CD4-positive, alpha-beta memory T cell (primary cell): ENCODE measurements at regions of chr2 and their contacts with region 1.

Region 1: GRCh38 chr2:207166039-207166348 is 246 bp upstream of the KLF7 start:
- DNase-seq: peak; percentile 90 to 97 (median 96)
- H3K4me3 ChIP-seq: peak overlapping the region; percentile 36 to 67
- H3K4me3 Mint-ChIP-seq: peak overlapping the region; percentile 89 to 99 (median 95)
- H3K27ac ChIP-seq: peak overlapping the region; percentile 97
- H3K27ac Mint-ChIP-seq: peak overlapping the region; percentile 91 to 98 (median 96)
- H3K4me1 ChIP-seq: peaks cover 40% of the 10 kb centered on the region
- H3K4me1 Mint-ChIP-seq: peaks cover 27 to 60% (median 40%) of the 10 kb centered on the region in 4 donors
- H3K27me3 ChIP-seq: no peaks in the 10 kb centered on the region
- H3K27me3 Mint-ChIP-seq: peaks cover 3 to 10% of the 10 kb centered on the region in 2 donors

Region 2: DNA sequence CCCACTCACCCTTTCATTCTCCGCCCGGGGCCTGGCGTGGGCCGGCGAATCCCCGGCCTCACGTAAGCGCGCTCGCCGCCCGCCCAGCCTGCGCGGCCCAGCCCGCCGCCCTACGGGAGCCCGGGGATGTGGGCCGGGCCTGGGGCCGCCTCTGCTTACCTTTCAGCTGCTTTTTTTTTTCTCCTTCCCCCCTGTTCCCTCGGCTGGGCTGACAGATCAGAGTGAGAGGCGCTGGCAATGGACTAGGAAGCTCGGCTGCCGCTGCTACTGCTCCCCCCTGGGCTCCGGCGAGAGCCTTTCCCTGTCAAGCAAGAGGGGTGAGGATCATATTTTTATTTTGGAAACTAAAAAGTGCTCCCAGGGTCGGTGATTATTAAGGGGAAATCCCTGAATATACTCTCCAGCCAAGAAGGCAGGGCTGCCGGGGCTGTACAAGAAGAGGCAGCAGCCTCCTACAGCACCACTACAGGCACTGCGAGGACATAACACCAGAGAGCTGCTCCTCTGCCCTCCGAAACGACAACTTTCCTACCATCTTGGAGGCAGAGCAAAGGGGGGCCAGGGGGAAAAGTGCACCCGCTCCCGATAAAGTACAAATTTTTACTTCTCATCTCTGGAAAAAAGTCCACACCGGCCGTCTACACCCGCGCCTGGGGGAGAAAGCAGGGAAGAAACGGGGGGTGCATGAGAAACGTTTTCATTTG is 1080.1 kb before region 1 on chr2 and contains the start of gene INO80D:
- CTCF ChIA-PET with region 1: no interaction called
- POLR2A ChIA-PET with region 1: no interaction called
- intact Hi-C with region 1: loop called (anchors 5 kb)
- DNase-seq: peak; percentile 88 to 91 (median 89)
- H3K4me3 ChIP-seq: peak within 1 kb of the TSS; percentile 81 to 94
- H3K4me3 Mint-ChIP-seq: peak within 1 kb of the TSS; percentile 98 to 100 (median 99)
- H3K27ac ChIP-seq: peak within 1 kb of the TSS; percentile 98
- H3K27ac Mint-ChIP-seq: peak within 1 kb of the TSS; percentile 99 to 100 (median 100)
- H3K4me1 ChIP-seq: peaks cover 44% of the 10 kb centered on the region
- H3K4me1 Mint-ChIP-seq: peaks cover 24 to 54% (median 37%) of the 10 kb centered on the region in 4 donors
- H3K27me3 ChIP-seq: no peaks in the 10 kb centered on the region
- H3K27me3 Mint-ChIP-seq: no peaks in the 10 kb centered on the region
- total RNA-seq, gene INO80D: 40.2 to 41.3 TPM

Region 3: DNA sequence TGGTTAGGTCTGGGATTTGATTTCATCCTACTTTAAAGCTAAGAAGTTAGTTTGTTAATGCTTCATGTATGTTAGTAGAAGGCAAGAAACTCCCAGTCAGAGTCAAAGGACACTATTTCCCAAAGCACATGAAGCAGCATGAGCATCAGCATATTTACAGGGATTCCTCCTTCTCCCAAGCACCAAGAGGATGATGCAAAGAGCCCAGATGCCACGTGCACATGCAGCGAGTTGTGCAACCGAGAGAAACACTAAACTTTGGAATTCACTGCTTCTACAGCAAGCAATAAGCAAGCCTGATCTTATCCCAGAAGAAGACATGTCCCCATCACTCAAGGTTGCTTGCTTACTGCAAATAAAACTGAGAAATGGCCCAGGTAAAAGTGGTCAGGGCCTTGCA is 194.2 kb before region 1 on chr2:
- CTCF ChIA-PET with region 1: no interaction called
- POLR2A ChIA-PET with region 1: no interaction called
- intact Hi-C with region 1: no loop called
- DNase-seq: no peak
- H3K4me3 ChIP-seq: no peak overlapping the region
- H3K4me3 Mint-ChIP-seq: no peak overlapping the region
- H3K27ac ChIP-seq: no peak overlapping the region
- H3K27ac Mint-ChIP-seq: no peak overlapping the region
- H3K4me1 ChIP-seq: no peaks in the 10 kb centered on the region
- H3K4me1 Mint-ChIP-seq: no peaks in the 10 kb centered on the region
- H3K27me3 ChIP-seq: no peaks in the 10 kb centered on the region
- H3K27me3 Mint-ChIP-seq: peaks cover 13 to 14% of the 10 kb centered on the region in 2 donors

Region 4: DNA sequence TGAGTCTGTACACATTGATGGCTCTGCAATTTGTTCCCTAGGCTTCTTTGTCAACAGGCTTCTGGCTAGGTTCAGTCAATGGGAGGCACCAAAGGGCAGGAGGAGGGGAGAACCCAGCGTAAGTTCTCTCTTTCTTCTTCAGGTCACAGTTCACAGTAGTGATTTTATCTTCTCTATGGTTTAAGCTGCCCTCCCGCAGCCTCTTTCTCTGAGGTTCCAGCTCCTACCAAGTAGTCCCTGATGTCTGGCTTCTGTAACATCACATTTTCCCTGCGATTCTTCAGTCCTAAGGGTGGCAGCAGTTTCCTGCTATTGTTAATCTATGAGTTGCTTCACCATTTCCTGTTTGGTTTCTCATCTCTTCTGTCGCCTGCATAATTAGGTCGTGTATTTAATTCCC is 119.3 kb before region 1 on chr2:
- CTCF ChIA-PET with region 1: interaction called, 7 read pairs
- POLR2A ChIA-PET with region 1: interaction called, 16 read pairs
- intact Hi-C with region 1: loop called (anchors 2 kb)
- DNase-seq: peak; percentile 37 to 62 (median 45)
- H3K4me3 ChIP-seq: no peak overlapping the region
- H3K4me3 Mint-ChIP-seq: peak overlapping the region in 7 of 8 donors; percentile 0 to 55 (median 23)
- H3K27ac ChIP-seq: no peak overlapping the region
- H3K27ac Mint-ChIP-seq: peak overlapping the region in 6 of 7 donors; percentile 10 to 84 (median 52)
- H3K4me1 ChIP-seq: peaks cover 9% of the 10 kb centered on the region
- H3K4me1 Mint-ChIP-seq: peaks cover 11 to 15% (median 13%) of the 10 kb centered on the region in 4 donors
- H3K27me3 ChIP-seq: no peaks in the 10 kb centered on the region
- H3K27me3 Mint-ChIP-seq: peaks cover 0 to 2% of the 10 kb centered on the region in 2 donors

Region 5: DNA sequence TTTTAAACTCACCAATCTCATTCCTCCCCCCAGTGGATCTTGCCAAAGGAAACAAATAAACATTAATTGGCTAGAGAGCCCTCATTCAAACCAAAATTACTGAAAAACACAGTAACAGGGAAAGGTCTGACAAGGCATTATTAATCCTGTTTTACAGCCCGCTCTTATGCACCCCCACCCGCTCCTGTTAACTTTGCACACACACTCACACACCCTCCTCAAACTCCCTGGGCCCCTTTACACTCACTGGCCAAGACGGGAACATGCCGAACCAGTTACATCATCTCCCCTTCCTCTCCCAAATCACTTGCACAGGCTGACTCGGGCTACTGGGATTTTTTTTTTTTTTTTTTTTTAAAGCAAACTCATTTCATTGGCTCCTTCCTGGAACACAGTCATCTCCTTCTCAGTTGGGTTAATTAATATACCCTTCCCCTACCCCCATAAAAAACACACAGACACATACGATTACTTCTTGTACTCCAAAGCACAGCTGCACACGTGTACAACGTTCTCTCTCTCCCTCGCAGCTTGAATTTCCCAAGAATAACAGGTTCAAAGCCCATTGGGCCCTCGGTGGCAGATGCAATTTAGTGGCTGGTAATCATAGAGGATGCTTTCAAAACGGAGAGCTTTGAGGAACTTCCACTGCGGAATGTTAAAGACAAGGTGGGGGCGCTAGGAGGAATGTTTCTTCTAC is 32.0 kb before region 1 on chr2:
- CTCF ChIA-PET with region 1: no interaction called
- POLR2A ChIA-PET with region 1: interaction called, 9 read pairs
- intact Hi-C with region 1: loop called (anchors 5 kb)
- DNase-seq: no peak
- H3K4me3 ChIP-seq: no peak overlapping the region
- H3K4me3 Mint-ChIP-seq: peak overlapping the region in 2 of 8 donors; percentile 22 to 27
- H3K27ac ChIP-seq: no peak overlapping the region
- H3K27ac Mint-ChIP-seq: peak overlapping the region in 5 of 7 donors; percentile 39 to 80 (median 48)
- H3K4me1 ChIP-seq: peaks cover 39% of the 10 kb centered on the region
- H3K4me1 Mint-ChIP-seq: peaks cover 37 to 74% (median 65%) of the 10 kb centered on the region in 4 donors
- H3K27me3 ChIP-seq: no peaks in the 10 kb centered on the region
- H3K27me3 Mint-ChIP-seq: no peaks in the 10 kb centered on the region

Region 6: DNA sequence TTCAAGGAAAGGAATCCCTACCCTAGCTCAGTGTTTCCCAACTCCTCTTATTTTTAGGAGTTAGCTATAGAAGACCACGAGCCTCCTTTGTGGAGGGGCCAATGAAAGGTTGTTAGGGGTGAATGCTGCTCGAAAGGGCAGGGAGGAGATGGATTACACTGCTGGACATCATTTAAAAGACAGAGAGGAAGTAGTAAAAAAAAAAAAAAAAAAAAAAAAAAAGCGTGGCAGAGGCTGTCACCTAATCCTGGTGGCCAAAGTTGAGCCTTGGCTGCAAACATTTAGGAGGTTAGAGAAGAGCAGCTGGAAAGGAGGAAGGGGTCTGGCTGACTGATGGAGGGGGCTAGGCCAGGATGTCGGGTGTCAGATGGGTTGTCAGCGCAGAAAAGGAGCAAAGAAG is 138.8 kb after region 1 on chr2:
- CTCF ChIA-PET with region 1: no interaction called
- POLR2A ChIA-PET with region 1: no interaction called
- intact Hi-C with region 1: no loop called
- DNase-seq: no peak
- H3K4me3 ChIP-seq: no peak overlapping the region
- H3K4me3 Mint-ChIP-seq: no peak overlapping the region
- H3K27ac ChIP-seq: no peak overlapping the region
- H3K27ac Mint-ChIP-seq: no peak overlapping the region
- H3K4me1 ChIP-seq: peaks cover 10% of the 10 kb centered on the region
- H3K4me1 Mint-ChIP-seq: peaks cover 6 to 14% (median 8%) of the 10 kb centered on the region in 4 donors
- H3K27me3 ChIP-seq: no peaks in the 10 kb centered on the region
- H3K27me3 Mint-ChIP-seq: peaks cover 0 to 1% of the 10 kb centered on the region in 2 donors

Region 7: DNA sequence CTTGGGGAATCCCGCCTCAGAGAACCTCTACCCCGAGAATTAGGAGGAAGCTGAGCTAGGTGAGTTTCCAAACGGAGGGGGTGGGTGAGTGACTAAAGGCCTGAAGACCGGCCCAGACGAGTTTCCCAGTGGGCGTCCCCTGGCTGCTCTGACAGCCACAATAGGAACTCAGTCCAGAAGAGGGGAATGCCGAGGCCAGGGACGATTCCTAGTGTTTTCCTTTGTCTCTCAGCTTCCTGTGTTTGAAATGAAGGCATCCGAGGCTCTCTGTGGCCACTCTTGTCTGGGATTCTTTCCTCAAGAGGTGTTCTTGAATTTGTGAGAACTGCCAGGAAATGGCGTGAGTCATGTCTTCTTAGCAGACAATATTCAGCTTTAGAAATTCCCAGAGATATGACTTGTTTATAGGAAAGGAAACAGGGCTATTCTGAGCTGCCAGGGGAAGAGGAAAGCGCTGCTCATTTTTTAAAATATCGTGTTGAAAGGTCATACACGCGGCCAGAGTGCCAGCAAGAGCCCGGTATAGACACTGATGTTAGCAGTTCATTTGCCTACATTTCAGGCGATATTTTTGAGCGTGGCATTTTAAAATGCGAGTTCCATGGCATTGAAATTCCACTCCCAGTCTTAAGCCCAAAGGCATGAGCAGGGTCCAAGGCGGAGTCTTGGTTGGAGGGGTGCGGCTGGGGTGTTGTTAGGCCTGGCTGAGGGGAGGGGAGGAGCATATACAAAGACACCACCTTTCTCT is 168.8 kb after region 1 on chr2:
- CTCF ChIA-PET with region 1: interaction called, 3 read pairs
- POLR2A ChIA-PET with region 1: interaction called, 5 read pairs
- intact Hi-C with region 1: loop called (anchors 10 kb)
- DNase-seq: no peak
- H3K4me3 ChIP-seq: no peak overlapping the region
- H3K4me3 Mint-ChIP-seq: peak overlapping the region; percentile 39 to 79 (median 69)
- H3K27ac ChIP-seq: no peak overlapping the region
- H3K27ac Mint-ChIP-seq: peak overlapping the region in 3 of 7 donors; percentile 25 to 72 (median 39)
- H3K4me1 ChIP-seq: peaks cover 45% of the 10 kb centered on the region
- H3K4me1 Mint-ChIP-seq: peaks cover 34 to 53% (median 40%) of the 10 kb centered on the region in 4 donors
- H3K27me3 ChIP-seq: no peaks in the 10 kb centered on the region
- H3K27me3 Mint-ChIP-seq: peaks cover 0 to 1% of the 10 kb centered on the region in 2 donors

Region 8: DNA sequence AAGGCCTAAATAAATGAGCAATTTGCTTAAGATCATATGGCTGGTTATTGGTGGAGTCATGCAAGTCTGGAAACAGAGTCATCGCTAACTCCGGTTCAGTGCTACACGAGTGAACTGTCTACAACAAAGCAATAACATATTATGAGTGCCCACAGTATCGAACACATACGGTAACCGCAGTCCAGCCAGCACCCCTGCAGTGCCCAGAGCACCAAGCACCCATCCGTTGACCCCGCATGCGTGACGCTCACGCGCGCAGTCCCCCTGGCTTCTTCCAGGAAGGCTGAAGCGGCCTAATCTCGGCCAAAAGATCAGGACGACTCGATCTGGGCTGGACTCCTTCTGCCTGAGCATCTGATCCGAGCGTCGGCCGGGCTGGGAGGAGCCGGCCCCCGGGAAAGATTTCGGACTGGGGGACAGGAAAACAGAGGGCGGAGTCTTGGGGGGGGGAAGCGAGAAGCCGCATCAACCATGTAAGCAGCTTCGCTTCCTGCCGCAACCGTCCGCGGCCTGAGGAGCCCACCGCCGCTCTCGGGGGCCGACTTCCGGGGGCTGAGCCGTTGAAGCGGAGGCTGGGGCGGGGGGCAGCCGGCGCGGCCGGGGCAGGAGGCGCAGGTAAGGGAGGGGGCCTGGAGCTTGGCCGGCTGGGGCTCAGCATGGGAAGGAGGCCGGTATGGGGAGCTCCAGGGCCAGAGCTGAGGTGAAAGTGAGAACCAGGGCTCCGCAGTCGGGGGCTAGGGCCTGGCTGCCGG is 1100.0 kb after region 1 on chr2 and contains the start of gene PIKFYVE:
- CTCF ChIA-PET with region 1: no interaction called
- POLR2A ChIA-PET with region 1: interaction called, 3 read pairs
- intact Hi-C with region 1: loop called (anchors 10 kb)
- DNase-seq: peak; percentile 80 to 92 (median 87)
- H3K4me3 ChIP-seq: peak within 1 kb of the TSS; percentile 51 to 95
- H3K4me3 Mint-ChIP-seq: peak within 1 kb of the TSS; percentile 92 to 99 (median 96)
- H3K27ac ChIP-seq: peak within 1 kb of the TSS; percentile 75
- H3K27ac Mint-ChIP-seq: peak within 1 kb of the TSS; percentile 86 to 97 (median 95)
- H3K4me1 ChIP-seq: peaks cover 46% of the 10 kb centered on the region
- H3K4me1 Mint-ChIP-seq: peaks cover 27 to 60% (median 39%) of the 10 kb centered on the region in 4 donors
- H3K27me3 ChIP-seq: no peaks in the 10 kb centered on the region
- H3K27me3 Mint-ChIP-seq: no peaks in the 10 kb centered on the region
- total RNA-seq, gene PIKFYVE: 44.5 to 45.8 TPM